Left ventricle myocardium superior (tissue), 1 donor: ENCODE measurements at regions of chr18 and their contacts with region 1.

Region 1: DNA sequence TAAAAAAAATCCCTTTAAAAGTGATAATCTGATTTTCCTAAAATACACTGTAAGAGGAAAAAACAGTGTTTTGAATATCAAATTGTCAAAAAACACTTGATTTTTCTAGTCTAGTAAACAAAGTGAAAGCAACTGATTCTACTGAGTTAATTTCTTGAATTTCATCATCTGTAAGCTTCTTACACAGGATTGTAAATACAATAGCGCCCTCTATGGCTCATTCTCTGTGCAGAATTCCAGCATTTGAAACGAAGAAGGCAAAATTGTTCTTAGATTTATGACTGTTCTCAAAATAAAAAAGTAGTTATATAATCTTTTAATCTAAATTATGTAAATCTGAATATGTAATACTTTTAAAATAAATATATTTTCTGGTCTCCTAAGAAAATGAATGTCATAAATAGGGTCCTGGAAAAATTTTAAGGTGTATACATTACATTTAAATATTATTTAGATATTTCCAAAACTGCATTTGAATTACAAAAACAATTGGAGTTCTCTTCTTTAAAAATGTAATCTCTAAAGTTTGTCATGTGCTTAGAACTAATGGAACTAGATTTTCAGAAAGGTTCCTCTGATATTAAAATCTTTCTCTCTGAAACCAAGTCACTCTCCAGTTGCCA is 176.9 kb upstream of the MC4R start:
- DNase-seq: no peak
- ATAC-seq: no peak

Region 2: DNA sequence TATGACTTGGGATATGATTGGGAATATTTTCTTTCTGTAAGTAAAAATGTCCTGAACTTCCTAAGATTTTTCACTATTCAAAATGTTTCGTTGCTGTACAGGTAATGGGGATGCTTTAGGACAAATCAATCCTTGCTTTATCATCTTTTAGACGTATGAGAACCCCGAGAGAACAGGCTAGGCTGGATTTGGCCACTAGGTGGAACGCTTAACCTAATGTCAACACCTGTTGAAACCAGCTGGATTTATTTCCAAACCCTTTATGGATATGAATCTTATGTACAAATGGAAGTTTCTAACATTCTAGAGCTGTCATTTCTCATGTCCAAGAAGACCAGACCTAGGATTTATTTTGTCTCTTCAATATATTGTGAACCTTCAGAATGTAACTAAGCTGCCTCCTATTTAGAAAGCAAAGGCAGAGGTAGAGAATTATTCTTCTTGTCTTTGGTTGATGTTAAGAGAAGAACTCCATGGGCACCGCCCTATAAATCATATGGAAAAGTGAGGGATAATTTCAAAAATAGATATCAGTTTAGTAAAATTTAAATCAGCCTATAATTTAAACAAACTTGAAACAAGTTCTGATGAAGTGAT is 553.0 kb before region 1 on chr18:
- intact Hi-C with region 1: loop called (anchors 10 kb)
- DNase-seq: no peak
- ATAC-seq: no peak